ENCODE measurements at regions of chr1 and their contacts with region 1.

Region 1: DNA sequence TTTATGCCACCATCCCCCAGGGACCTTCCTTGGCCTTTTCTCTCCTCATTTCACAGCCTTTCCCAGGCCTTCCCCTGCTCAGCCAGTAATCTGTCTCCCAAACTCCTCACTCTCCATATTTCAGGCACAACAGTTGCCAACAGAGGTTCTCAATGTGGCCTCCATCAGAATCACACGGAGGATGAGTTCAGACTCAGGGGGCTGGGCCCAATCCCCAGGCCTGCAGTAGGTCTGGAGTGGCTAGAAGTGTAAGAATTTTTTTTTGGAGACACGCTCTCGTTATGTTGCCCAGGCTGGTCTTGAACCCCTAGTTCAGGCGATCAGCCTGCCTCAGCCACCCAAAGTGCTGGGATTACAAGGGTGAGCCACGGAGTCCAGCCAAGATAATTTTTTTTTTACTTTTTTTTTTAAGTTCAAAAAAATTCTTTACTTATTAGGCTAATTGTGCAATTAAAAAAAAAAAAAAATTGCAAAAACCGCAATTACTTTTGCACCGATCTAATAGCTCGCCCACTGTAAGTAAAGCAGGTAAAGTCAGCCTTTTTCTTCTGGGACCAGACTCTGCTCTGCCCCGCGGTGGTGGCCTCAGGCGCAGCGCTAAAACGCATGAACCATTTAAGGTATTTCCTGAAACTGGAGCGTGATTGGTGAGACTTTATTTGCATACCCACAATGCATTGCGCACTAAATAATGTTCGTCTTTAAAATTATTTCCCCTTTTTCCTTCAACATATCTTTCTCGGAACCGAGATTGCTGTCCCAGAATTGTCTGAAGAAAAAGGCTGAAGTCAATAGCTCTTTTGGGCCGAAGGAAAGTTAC is 18.7 kb downstream of the KIAA2013 start:
- DNase-seq: peak; percentile 70 to 96 (median 92)
- ATAC-seq: peak; percentile 68
- H3K4me3 ChIP-seq: peak overlapping the region in 1 of 2 experiments; percentile 76
- H3K4me3 Mint-ChIP-seq: peak overlapping the region; percentile 92
- H3K27ac ChIP-seq: peak overlapping the region; percentile 99 to 100
- H3K27ac Mint-ChIP-seq: peak overlapping the region; percentile 100
- H3K4me1 ChIP-seq: peaks cover 20% of the 10 kb centered on the region
- H3K4me1 Mint-ChIP-seq: peaks cover 33% of the 10 kb centered on the region
- H3K27me3 ChIP-seq: peaks cover under 1% of the 10 kb centered on the region in 2 experiments
- H3K27me3 Mint-ChIP-seq: peaks cover 2% of the 10 kb centered on the region
- CTCF ChIP-seq: peak; percentile 65

Region 2: GRCh38 chr1:10430216-10431069 is 1477.0 kb before region 1 on chr1 and contains the start of gene CENPS:
- CTCF ChIA-PET with region 1: no interaction called
- POLR2A ChIA-PET with region 1: no interaction called
- intact Hi-C with region 1: no loop called
- DNase-seq: peak; percentile 72 to 95 (median 92)
- ATAC-seq: peak; percentile 85
- H3K4me3 ChIP-seq: peak within 1 kb of the TSS; percentile 85 to 96
- H3K4me3 Mint-ChIP-seq: peak within 1 kb of the TSS; percentile 89
- H3K27ac ChIP-seq: peak within 1 kb of the TSS; percentile 81 to 86
- H3K27ac Mint-ChIP-seq: peak within 1 kb of the TSS; percentile 91
- H3K4me1 ChIP-seq: peaks cover 18% of the 10 kb centered on the region
- H3K4me1 Mint-ChIP-seq: peaks cover 23% of the 10 kb centered on the region
- H3K27me3 ChIP-seq: no peaks in the 10 kb centered on the region
- H3K27me3 Mint-ChIP-seq: no peaks in the 10 kb centered on the region
- CTCF ChIP-seq: peak; percentile 97
- total RNA-seq, gene CENPS: 2.0 to 3.5 TPM

Region 3: GRCh38 chr1:11262171-11263049 is 645.1 kb before region 1 on chr1 and contains the start of gene MTOR:
- CTCF ChIA-PET with region 1: no interaction called
- POLR2A ChIA-PET with region 1: no interaction called
- intact Hi-C with region 1: loop called (anchors 5 to 10 kb)
- DNase-seq: peak; percentile 92 to 100 (median 96)
- ATAC-seq: peak; percentile 97
- H3K4me3 ChIP-seq: peak within 1 kb of the TSS; percentile 85 to 90
- H3K4me3 Mint-ChIP-seq: peak within 1 kb of the TSS; percentile 81
- H3K27ac ChIP-seq: peak within 1 kb of the TSS; percentile 61 to 81
- H3K27ac Mint-ChIP-seq: peak within 1 kb of the TSS; percentile 89
- H3K4me1 ChIP-seq: peaks cover 12% of the 10 kb centered on the region
- H3K4me1 Mint-ChIP-seq: peaks cover 20% of the 10 kb centered on the region
- H3K27me3 ChIP-seq: no peaks in the 10 kb centered on the region
- H3K27me3 Mint-ChIP-seq: no peaks in the 10 kb centered on the region
- CTCF ChIP-seq: no peak
- total RNA-seq, gene MTOR: 24.7 to 25.1 TPM

Region 4: GRCh38 chr1:11735854-11736745 is 171.4 kb before region 1 on chr1 and contains the start of gene AGTRAP:
- CTCF ChIA-PET with region 1: no interaction called
- POLR2A ChIA-PET with region 1: interaction called, 14 read pairs
- intact Hi-C with region 1: loop called (anchors 5 kb)
- DNase-seq: peak; percentile 74 to 94 (median 86)
- ATAC-seq: peak; percentile 65
- H3K4me3 ChIP-seq: peak within 1 kb of the TSS; percentile 87 to 90
- H3K4me3 Mint-ChIP-seq: peak within 1 kb of the TSS; percentile 91
- H3K27ac ChIP-seq: peak within 1 kb of the TSS; percentile 50 to 74
- H3K27ac Mint-ChIP-seq: peak within 1 kb of the TSS; percentile 65
- H3K4me1 ChIP-seq: peaks cover 50% of the 10 kb centered on the region
- H3K4me1 Mint-ChIP-seq: peaks cover 69% of the 10 kb centered on the region
- H3K27me3 ChIP-seq: no peaks in the 10 kb centered on the region
- H3K27me3 Mint-ChIP-seq: no peaks in the 10 kb centered on the region
- CTCF ChIP-seq: no peak
- total RNA-seq, gene AGTRAP: 10.4 to 10.9 TPM

Region 5: DNA sequence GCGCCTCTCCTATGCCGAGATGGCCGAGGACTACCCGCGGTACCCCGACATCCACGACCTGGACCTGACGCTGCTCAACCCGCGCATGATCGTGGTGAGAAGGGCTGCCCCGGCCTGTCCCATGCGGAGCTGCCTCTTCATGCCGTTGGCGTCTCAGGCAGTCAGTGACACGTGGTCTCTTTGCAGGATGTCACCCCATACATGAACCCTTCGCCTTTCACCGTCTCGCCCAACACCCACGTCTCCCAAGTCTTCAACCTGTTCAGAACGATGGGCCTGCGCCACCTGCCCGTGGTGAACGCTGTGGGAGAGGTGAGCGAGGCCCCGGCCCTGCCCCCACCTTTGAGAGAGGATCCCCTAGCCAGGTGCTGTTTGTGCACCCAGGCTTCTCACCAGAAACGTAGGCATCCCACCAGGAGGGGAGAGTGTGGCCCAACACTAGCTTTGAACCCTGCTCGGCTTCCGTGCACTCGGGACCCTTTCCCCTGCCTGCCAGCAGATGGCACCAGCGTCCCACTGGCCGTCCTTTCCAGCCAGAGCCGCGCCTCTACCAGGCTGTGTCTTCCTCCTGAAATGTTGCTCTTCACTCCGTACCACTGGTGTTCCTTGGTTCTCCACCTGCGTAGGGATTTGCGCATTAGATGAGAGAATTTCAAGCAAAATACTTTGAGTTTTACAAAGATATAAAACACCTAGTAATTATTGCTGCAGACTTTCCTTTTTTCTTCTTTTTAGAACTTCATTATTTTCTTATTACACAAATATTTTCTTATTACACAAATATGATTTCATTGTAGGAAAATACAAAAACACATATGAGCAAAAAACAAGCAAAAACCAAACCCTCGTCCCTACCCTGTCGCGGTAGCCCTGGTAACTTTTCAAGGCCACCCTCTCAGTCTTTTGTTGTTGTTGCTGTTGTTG is 68.9 kb before region 1 on chr1:
- CTCF ChIA-PET with region 1: interaction called, 8 read pairs
- POLR2A ChIA-PET with region 1: interaction called, 5 read pairs
- intact Hi-C with region 1: loop called (anchors 1 kb)
- DNase-seq: peak; percentile 50 to 84 (median 76)
- ATAC-seq: peak; percentile 98
- H3K4me3 ChIP-seq: no peak overlapping the region
- H3K4me3 Mint-ChIP-seq: no peak overlapping the region
- H3K27ac ChIP-seq: no peak overlapping the region
- H3K27ac Mint-ChIP-seq: no peak overlapping the region
- H3K4me1 ChIP-seq: no peaks in the 10 kb centered on the region
- H3K4me1 Mint-ChIP-seq: peaks cover 5% of the 10 kb centered on the region
- H3K27me3 ChIP-seq: no peaks in the 10 kb centered on the region
- H3K27me3 Mint-ChIP-seq: no peaks in the 10 kb centered on the region
- CTCF ChIP-seq: peak; percentile 96

Region 6: DNA sequence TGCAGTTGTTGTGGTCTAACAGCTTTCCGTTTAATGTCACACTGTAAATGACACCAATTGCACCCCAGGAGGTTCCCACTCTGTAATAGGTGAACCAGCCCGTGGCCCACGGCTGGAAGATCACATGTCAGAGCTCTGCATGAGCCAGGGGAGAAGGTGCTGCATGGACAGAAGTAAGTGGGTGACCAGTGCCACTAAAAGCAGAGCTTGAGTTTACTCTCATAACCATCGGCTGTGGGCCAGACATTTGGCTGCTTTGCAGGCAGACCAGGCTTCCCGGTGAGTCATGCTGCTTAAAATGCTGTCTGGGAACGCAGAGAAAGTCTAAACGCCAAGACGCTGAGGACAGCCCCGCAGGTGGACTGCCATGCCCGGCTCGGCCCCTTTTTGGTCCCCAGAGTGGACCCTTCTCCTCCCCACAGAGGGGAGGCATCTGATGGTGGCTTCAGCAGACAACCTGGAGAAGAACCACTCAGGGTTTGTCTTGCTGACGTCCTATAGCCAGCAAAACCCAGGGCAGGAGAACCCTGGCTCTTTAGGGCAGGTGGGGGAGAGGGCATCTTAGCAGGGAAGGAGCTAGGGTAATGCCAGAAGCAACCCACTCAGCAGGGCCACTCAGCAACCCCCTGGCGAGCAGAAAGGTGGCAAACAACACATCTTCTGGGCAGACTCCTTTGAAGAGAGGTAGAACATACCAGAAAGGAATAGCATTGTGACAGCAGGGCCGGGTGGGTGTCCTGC is 11.5 kb after region 1 on chr1:
- CTCF ChIA-PET with region 1: interaction called, 3 read pairs
- POLR2A ChIA-PET with region 1: interaction called, 13 read pairs
- intact Hi-C with region 1: no loop called
- DNase-seq: no peak
- ATAC-seq: no peak
- H3K4me3 ChIP-seq: no peak overlapping the region
- H3K4me3 Mint-ChIP-seq: no peak overlapping the region
- H3K27ac ChIP-seq: no peak overlapping the region
- H3K27ac Mint-ChIP-seq: no peak overlapping the region
- H3K4me1 ChIP-seq: peaks cover 20% of the 10 kb centered on the region
- H3K4me1 Mint-ChIP-seq: peaks cover 24% of the 10 kb centered on the region
- H3K27me3 ChIP-seq: no peaks in the 10 kb centered on the region
- H3K27me3 Mint-ChIP-seq: no peaks in the 10 kb centered on the region
- CTCF ChIP-seq: no peak

Region 7: GRCh38 chr1:11934302-11935056 is 27.0 kb after region 1 on chr1 and contains the start of gene PLOD1:
- CTCF ChIA-PET with region 1: interaction called, 4 read pairs
- POLR2A ChIA-PET with region 1: interaction called, 28 read pairs
- intact Hi-C with region 1: loop called (anchors 1 to 2 kb)
- DNase-seq: peak; percentile 74 to 91 (median 85)
- ATAC-seq: peak; percentile 100
- H3K4me3 ChIP-seq: peak within 1 kb of the TSS; percentile 63 to 71
- H3K4me3 Mint-ChIP-seq: peak within 1 kb of the TSS; percentile 84
- H3K27ac ChIP-seq: peak within 1 kb of the TSS; percentile 26 to 45
- H3K27ac Mint-ChIP-seq: no peak within 1 kb of the TSS
- H3K4me1 ChIP-seq: peaks cover 11% of the 10 kb centered on the region
- H3K4me1 Mint-ChIP-seq: peaks cover 7% of the 10 kb centered on the region
- H3K27me3 ChIP-seq: no peaks in the 10 kb centered on the region
- H3K27me3 Mint-ChIP-seq: no peaks in the 10 kb centered on the region
- CTCF ChIP-seq: no peak
- total RNA-seq, gene PLOD1: 2.0 to 2.4 TPM

Region 8: GRCh38 chr1:12019858-12020509 is 112.5 kb after region 1 on chr1:
- CTCF ChIA-PET with region 1: no interaction called
- POLR2A ChIA-PET with region 1: interaction called, 33 read pairs
- intact Hi-C with region 1: loop called in 1 of 2 experiments (anchors 2 kb)
- DNase-seq: peak in 2 of 9 experiments; percentile 3 to 27
- ATAC-seq: no peak
- H3K4me3 ChIP-seq: peak overlapping the region; percentile 69 to 94
- H3K4me3 Mint-ChIP-seq: peak overlapping the region; percentile 90
- H3K27ac ChIP-seq: peak overlapping the region; percentile 48 to 59
- H3K27ac Mint-ChIP-seq: peak overlapping the region; percentile 45
- H3K4me1 ChIP-seq: peaks cover 11% of the 10 kb centered on the region
- H3K4me1 Mint-ChIP-seq: peaks cover 15% of the 10 kb centered on the region
- H3K27me3 ChIP-seq: no peaks in the 10 kb centered on the region
- H3K27me3 Mint-ChIP-seq: no peaks in the 10 kb centered on the region
- CTCF ChIP-seq: no peak

Region 9: GRCh38 chr1:12196641-12197482 is 289.4 kb after region 1 on chr1:
- CTCF ChIA-PET with region 1: no interaction called
- POLR2A ChIA-PET with region 1: no interaction called
- intact Hi-C with region 1: no loop called
- DNase-seq: peak in 1 of 9 experiments; percentile 44
- ATAC-seq: no peak
- H3K4me3 ChIP-seq: no peak overlapping the region
- H3K4me3 Mint-ChIP-seq: no peak overlapping the region
- H3K27ac ChIP-seq: peak overlapping the region in 1 of 2 experiments; percentile 8
- H3K27ac Mint-ChIP-seq: no peak overlapping the region
- H3K4me1 ChIP-seq: peaks cover 5% of the 10 kb centered on the region
- H3K4me1 Mint-ChIP-seq: peaks cover 13% of the 10 kb centered on the region
- H3K27me3 ChIP-seq: no peaks in the 10 kb centered on the region
- H3K27me3 Mint-ChIP-seq: no peaks in the 10 kb centered on the region
- CTCF ChIP-seq: no peak